CD4-positive, alpha-beta memory T cell (primary cell): ENCODE measurements at regions of chr10 and their contacts with region 1.

Region 1: GRCh38 chr10:1368842-1369171 is 312.6 kb downstream of the WDR37 start:
- DNase-seq: peak in 1 of 5 donors; percentile 12
- H3K4me3 ChIP-seq: no peak overlapping the region
- H3K4me3 Mint-ChIP-seq: no peak overlapping the region
- H3K27ac ChIP-seq: no peak overlapping the region
- H3K27ac Mint-ChIP-seq: no peak overlapping the region
- H3K4me1 ChIP-seq: no peaks in the 10 kb centered on the region
- H3K4me1 Mint-ChIP-seq: peaks cover 0 to 3% (median 0%) of the 10 kb centered on the region in 4 donors
- H3K27me3 ChIP-seq: peaks cover 4% of the 10 kb centered on the region
- H3K27me3 Mint-ChIP-seq: peaks cover 7 to 38% of the 10 kb centered on the region in 2 donors

Region 2: GRCh38 chr10:1109795-1110673 is 258.8 kb before region 1 on chr10:
- CTCF ChIA-PET with region 1: interaction called, 14 read pairs
- POLR2A ChIA-PET with region 1: no interaction called
- intact Hi-C with region 1: loop called (anchors 1 kb)
- DNase-seq: peak; percentile 78 to 84 (median 80)
- H3K4me3 ChIP-seq: peak overlapping the region in 1 of 2 donors; percentile 20
- H3K4me3 Mint-ChIP-seq: peak overlapping the region; percentile 64 to 85 (median 72)
- H3K27ac ChIP-seq: peak overlapping the region; percentile 64
- H3K27ac Mint-ChIP-seq: peak overlapping the region; percentile 75 to 97 (median 95)
- H3K4me1 ChIP-seq: peaks cover 19% of the 10 kb centered on the region
- H3K4me1 Mint-ChIP-seq: peaks cover 18 to 31% (median 29%) of the 10 kb centered on the region in 4 donors
- H3K27me3 ChIP-seq: no peaks in the 10 kb centered on the region
- H3K27me3 Mint-ChIP-seq: no peaks in the 10 kb centered on the region

Region 3: GRCh38 chr10:1142596-1142995 is 226.2 kb before region 1 on chr10:
- CTCF ChIA-PET with region 1: interaction called, 4 read pairs
- POLR2A ChIA-PET with region 1: no interaction called
- intact Hi-C with region 1: loop called (anchors 2 kb)
- DNase-seq: no peak
- H3K4me3 ChIP-seq: no peak overlapping the region
- H3K4me3 Mint-ChIP-seq: no peak overlapping the region
- H3K27ac ChIP-seq: no peak overlapping the region
- H3K27ac Mint-ChIP-seq: no peak overlapping the region
- H3K4me1 ChIP-seq: no peaks in the 10 kb centered on the region
- H3K4me1 Mint-ChIP-seq: peaks cover 0 to 1% (median 0%) of the 10 kb centered on the region in 4 donors
- H3K27me3 ChIP-seq: no peaks in the 10 kb centered on the region
- H3K27me3 Mint-ChIP-seq: peaks cover 3 to 8% of the 10 kb centered on the region in 2 donors

Region 4: DNA sequence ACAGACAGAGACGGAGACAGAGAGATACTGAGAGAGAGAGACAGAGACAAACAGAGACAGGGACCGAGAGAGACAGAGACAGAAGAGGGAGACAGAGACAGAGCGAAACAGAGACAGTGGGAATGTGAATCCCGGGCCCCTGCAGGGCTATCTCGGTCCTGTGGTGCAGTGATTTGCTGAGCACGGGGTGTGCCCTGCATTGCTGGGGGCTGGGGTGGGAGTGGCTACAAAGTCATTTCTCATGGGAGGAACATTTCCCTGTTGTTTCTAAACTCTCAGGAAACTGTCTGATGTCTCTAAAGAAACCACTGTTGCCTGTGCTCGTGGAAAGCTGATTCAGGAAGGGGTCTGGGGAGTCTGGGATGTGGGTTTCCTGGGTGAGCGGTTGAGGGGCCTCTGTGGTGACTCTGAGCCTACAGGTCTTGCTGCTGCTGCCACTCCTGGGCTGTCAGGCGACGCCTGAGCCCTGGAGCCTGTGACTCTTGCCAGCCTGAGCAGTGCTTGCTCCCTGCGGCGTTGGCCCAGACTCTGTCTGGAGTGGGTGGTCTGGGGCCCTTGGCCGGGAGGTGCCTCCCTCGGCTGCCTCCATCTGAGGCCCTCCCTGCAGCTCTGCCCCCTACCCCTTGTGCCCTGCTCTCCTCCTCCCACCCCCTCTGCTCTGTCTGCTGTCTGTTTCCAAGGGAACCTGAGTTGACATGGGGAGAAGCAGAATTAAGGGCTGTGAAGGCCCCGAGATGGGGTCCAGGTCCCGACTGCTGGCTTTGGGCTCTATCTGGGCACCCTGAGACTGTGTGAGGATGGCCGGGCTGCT is 20.6 kb before region 1 on chr10:
- CTCF ChIA-PET with region 1: no interaction called
- POLR2A ChIA-PET with region 1: no interaction called
- intact Hi-C with region 1: no loop called
- DNase-seq: no peak
- H3K4me3 ChIP-seq: no peak overlapping the region
- H3K4me3 Mint-ChIP-seq: no peak overlapping the region
- H3K27ac ChIP-seq: no peak overlapping the region
- H3K27ac Mint-ChIP-seq: no peak overlapping the region
- H3K4me1 ChIP-seq: no peaks in the 10 kb centered on the region
- H3K4me1 Mint-ChIP-seq: peaks cover 0 to 1% (median 0%) of the 10 kb centered on the region in 4 donors
- H3K27me3 ChIP-seq: no peaks in the 10 kb centered on the region
- H3K27me3 Mint-ChIP-seq: peaks cover 6 to 9% of the 10 kb centered on the region in 2 donors